Thyroid gland (tissue), 4 donors: ENCODE measurements at regions of chr4 and their contacts with region 1.

Region 1: GRCh38 chr4:121484633-121485032 is 103.8 kb upstream of the QRFPR start:
- DNase-seq: peak; percentile 48 to 54
- H3K4me3 ChIP-seq: no peak overlapping the region
- H3K27ac ChIP-seq: no peak overlapping the region
- H3K4me1 ChIP-seq: no peaks in the 10 kb centered on the region
- H3K27me3 ChIP-seq: no peaks in the 10 kb centered on the region
- CTCF ChIP-seq: peak; percentile 58 to 79 (median 76)
- POLR2A ChIP-seq: no peak

Region 2: DNA sequence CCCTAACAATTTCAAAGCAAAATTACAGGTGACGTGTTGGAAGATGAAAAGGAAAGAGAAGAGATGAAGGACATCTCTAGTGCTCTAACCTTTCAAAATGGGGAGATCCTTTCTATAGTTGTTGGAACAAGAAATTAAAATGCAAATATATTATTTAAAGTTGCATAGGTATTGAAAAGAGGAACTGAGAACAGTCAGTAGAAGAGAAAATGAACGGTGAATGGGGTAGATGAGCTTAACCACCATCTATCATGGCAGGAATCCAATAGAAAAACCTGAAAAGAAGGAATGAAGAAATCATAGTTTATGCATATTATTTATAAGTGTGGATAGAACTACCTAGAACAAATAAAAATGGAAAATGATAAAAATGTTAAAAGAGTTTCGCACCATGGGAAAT is 170.1 kb after region 1 on chr4:
- intact Hi-C with region 1: loop called (anchors 5 kb)
- DNase-seq: no peak
- H3K4me3 ChIP-seq: no peak overlapping the region
- H3K27ac ChIP-seq: no peak overlapping the region
- H3K4me1 ChIP-seq: peaks cover 4% of the 10 kb centered on the region in 2 donors
- H3K27me3 ChIP-seq: no peaks in the 10 kb centered on the region
- CTCF ChIP-seq: no peak
- POLR2A ChIP-seq: no peak

Region 3: DNA sequence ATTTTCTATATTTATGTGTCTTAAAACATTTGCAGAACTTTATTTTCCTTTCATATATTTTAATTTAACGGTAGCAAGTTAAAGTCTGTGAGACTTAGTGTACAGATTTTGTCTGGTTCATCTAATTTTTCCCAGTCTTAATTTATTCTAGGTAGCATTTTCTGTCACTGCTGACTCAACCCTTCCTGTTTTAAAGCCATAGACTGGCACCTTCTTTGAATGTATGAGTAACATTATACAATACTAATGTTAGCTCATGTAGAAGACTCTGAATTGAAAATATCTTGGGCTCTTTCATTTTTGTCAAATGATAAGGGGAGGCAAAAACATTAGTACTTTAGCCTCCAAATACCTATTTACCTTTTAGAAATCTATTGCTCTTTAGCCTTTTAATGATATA is 711.1 kb after region 1 on chr4:
- intact Hi-C with region 1: no loop called
- DNase-seq: no peak
- H3K4me3 ChIP-seq: no peak overlapping the region
- H3K27ac ChIP-seq: no peak overlapping the region
- H3K4me1 ChIP-seq: no peaks in the 10 kb centered on the region
- H3K27me3 ChIP-seq: no peaks in the 10 kb centered on the region
- CTCF ChIP-seq: no peak
- POLR2A ChIP-seq: no peak